ENCODE measurements at regions of chr2 and their contacts with region 1.

Region 1: DNA sequence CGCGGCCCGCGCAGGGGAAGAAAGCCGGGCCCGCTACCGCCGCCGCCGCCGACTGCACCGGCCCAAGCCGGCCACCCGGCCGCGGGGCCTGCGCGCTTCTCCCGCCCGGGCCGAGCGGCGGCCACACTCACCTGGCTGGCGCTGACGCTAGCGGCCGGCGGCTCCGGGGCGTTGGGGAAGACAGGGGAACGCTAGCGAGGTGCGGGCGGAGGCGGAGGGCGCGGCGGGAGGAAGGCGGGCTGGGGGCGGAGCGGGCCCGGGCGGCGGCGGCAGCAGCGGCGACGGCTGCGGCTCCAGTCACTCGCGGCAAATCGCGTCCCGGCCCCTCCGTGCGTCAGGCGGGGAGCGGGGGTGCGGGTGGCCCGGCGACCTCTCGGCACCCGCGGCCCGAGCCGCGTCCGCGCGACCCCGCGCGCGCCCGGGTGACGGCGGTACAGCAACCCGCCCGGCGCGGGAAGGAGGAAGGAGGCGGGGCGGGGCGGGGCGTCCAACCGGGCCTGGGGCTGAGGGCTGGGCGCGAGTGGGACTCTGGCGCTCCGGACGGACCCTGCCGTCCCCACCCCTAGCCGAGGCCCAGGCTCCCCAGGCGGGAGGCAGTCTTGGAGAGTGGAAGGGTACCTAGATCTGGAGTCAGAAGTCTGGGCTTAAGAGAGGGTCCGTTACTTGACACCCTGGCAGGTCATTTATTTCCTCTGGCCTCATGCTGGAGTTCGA is at the start of gene SESTD1:
- DNase-seq: peak; percentile 91
- H3K4me3 Mint-ChIP-seq: peak within 1 kb of the TSS; percentile 91
- H3K27ac Mint-ChIP-seq: peak within 1 kb of the TSS; percentile 88
- H3K4me1 Mint-ChIP-seq: peaks cover 27% of the 10 kb centered on the region
- H3K27me3 Mint-ChIP-seq: peaks cover 49% of the 10 kb centered on the region
- total RNA-seq, gene SESTD1: 12.3 and 13.4 TPM in 2 replicates

Region 2: DNA sequence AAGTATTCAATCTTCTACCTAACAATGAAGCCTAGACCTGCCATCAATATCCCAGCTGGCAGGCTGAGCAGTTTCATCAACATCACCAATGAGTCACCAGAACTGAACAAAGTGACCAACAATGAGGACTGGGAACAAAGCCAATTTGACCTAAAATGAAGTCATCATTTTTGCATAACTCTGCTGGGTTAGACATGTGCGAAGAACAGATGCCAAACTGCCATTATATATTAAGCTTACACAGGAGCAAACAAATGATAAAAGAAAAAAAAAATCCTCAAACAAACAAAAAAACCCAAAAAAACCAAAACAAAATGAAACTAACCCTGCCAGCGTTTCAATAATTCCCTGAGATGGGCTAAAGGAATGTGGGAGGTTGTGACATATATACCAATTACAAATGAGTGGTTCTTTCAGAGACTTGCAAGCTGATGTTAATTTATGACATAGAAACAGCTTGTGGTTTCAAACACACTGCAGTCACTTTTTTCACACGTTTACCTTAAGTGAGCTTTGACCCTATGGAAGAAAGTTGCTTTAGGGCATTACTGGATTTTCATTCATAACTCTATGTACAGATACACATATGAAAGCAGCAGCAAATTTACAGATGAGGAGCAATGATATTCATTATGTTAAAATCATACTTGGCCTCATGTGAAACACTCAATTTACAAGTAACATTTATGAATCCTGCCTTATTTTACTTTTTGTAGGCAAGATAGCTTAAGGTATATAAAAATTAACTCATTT is 157.7 kb before region 1 on chr2:
- intact Hi-C with region 1: loop called (anchors 5 kb)
- DNase-seq: no peak
- H3K4me3 Mint-ChIP-seq: peak overlapping the region; percentile 38
- H3K27ac Mint-ChIP-seq: peak overlapping the region; percentile 46
- H3K4me1 Mint-ChIP-seq: peaks cover 29% of the 10 kb centered on the region
- H3K27me3 Mint-ChIP-seq: no peaks in the 10 kb centered on the region

Region 3: GRCh38 chr2:179226203-179226960 is 38.1 kb before region 1 on chr2:
- intact Hi-C with region 1: loop called (anchors 5 kb)
- DNase-seq: no peak
- H3K4me3 Mint-ChIP-seq: no peak overlapping the region
- H3K27ac Mint-ChIP-seq: no peak overlapping the region
- H3K4me1 Mint-ChIP-seq: no peaks in the 10 kb centered on the region
- H3K27me3 Mint-ChIP-seq: peaks cover 3% of the 10 kb centered on the region

Region 4: DNA sequence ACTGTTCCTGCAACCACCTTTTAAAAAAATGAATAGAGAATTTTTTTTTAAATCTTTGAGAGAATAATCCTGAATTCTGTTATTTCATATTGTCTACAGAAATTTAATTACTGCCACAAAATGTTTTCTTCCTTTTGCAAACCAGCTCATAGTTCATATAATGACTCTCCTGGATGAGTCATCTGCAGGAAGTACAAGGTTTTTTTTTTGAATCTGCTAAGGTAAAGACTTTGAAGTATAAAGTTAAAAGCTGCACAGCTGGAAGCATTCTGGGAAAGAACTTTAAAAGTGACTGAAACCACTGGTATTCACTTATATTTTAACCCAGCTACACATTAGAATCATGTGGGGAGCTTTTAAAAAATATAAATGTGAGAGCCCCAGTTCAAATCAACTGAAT is 25.3 kb before region 1 on chr2:
- intact Hi-C with region 1: loop called (anchors 1 kb)
- DNase-seq: peak; percentile 71
- H3K4me3 Mint-ChIP-seq: peak overlapping the region; percentile 36
- H3K27ac Mint-ChIP-seq: peak overlapping the region; percentile 47
- H3K4me1 Mint-ChIP-seq: peaks cover 34% of the 10 kb centered on the region
- H3K27me3 Mint-ChIP-seq: no peaks in the 10 kb centered on the region

Region 5: GRCh38 chr2:179253226-179253625 is 11.3 kb before region 1 on chr2:
- intact Hi-C with region 1: loop called (anchors 1 kb)
- DNase-seq: peak; percentile 45
- H3K4me3 Mint-ChIP-seq: peak overlapping the region; percentile 18
- H3K27ac Mint-ChIP-seq: peak overlapping the region; percentile 66
- H3K4me1 Mint-ChIP-seq: peaks cover 47% of the 10 kb centered on the region
- H3K27me3 Mint-ChIP-seq: peaks cover 3% of the 10 kb centered on the region

Region 6: GRCh38 chr2:179290329-179290728 is 25.8 kb after region 1 on chr2:
- intact Hi-C with region 1: no loop called
- DNase-seq: no peak
- H3K4me3 Mint-ChIP-seq: no peak overlapping the region
- H3K27ac Mint-ChIP-seq: no peak overlapping the region
- H3K4me1 Mint-ChIP-seq: no peaks in the 10 kb centered on the region
- H3K27me3 Mint-ChIP-seq: peaks cover 2% of the 10 kb centered on the region

Measured in activated CD4-positive, alpha-beta T cell treated with anti-CD3 and anti-CD28 coated beads, Interleukin-2, amount 10 ng/mL, durations not matched to agents 24 days and 14 days (primary cell).